CD8-positive, alpha-beta T cell (primary cell): ENCODE measurements at regions of chr11 and their contacts with region 1.

Region 1: GRCh38 chr11:88543902-88544655 is 206.5 kb upstream of the CTSC start:
- DNase-seq: peak; percentile 51 to 85 (median 74)
- ATAC-seq: peak; percentile 94
- H3K4me3 ChIP-seq: no peak overlapping the region
- H3K4me3 Mint-ChIP-seq: no peak overlapping the region
- H3K27ac ChIP-seq: no peak overlapping the region
- H3K27ac Mint-ChIP-seq: no peak overlapping the region
- H3K4me1 ChIP-seq: no peaks in the 10 kb centered on the region
- H3K4me1 Mint-ChIP-seq: peaks cover 2% of the 10 kb centered on the region
- H3K27me3 ChIP-seq: no peaks in the 10 kb centered on the region
- H3K27me3 Mint-ChIP-seq: no peaks in the 10 kb centered on the region
- CTCF ChIP-seq: peak; percentile 93

Region 2: DNA sequence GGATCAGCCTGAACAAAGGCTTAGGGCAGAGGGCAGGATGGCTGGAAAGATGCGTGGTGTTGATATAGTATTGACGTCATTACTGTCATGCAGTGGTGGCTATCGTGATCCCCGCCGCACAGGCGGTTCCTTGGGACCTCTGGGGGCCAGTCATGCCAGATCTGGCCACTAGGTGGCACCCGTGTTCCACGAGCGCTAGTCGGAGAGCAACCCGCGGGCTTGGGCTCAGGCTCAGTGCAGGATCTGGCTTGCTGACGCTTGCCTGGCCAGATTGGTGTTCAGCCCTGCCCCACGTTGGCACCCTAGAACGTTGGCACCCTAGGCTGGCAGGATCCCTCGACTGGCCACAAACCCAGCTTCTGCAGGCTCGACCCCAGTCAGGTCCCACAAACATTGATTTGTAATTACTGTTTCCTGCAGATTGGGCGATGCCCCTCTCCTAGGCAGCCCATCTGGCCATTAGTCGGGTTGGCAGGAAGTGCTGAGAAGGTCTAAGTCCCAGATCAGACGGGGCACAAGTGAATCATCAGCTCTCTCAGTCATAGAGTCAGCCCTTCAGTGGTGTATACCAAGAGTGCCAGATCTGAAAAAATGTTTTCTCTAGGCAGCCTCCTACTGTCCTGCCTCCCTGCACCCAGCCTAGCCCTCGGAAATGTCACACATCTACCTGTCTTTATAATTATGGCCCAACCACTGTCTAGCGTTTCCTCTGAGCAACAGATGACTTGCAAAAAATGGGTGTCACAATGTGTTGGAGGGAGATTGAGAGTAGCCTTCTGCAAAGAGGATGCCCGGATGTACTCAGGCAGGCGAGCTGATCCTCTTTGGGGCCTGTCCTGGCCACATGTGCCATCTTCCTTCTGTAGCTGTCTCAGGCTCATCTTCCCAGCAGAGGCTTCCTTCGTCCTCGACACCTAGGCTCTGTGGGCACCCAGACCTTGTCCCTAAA is 1191.0 kb before region 1 on chr11:
- CTCF ChIA-PET with region 1: interaction called, 4 read pairs
- POLR2A ChIA-PET with region 1: no interaction called
- intact Hi-C with region 1: loop called in 1 of 2 experiments (anchors 1 kb)
- DNase-seq: peak; percentile 66 to 90 (median 80)
- ATAC-seq: peak; percentile 94
- H3K4me3 ChIP-seq: no peak overlapping the region
- H3K4me3 Mint-ChIP-seq: no peak overlapping the region
- H3K27ac ChIP-seq: no peak overlapping the region
- H3K27ac Mint-ChIP-seq: no peak overlapping the region
- H3K4me1 ChIP-seq: peaks cover 5% of the 10 kb centered on the region
- H3K4me1 Mint-ChIP-seq: peaks cover 10% of the 10 kb centered on the region
- H3K27me3 ChIP-seq: no peaks in the 10 kb centered on the region
- H3K27me3 Mint-ChIP-seq: peaks cover 16% of the 10 kb centered on the region
- CTCF ChIP-seq: peak; percentile 97

Region 3: DNA sequence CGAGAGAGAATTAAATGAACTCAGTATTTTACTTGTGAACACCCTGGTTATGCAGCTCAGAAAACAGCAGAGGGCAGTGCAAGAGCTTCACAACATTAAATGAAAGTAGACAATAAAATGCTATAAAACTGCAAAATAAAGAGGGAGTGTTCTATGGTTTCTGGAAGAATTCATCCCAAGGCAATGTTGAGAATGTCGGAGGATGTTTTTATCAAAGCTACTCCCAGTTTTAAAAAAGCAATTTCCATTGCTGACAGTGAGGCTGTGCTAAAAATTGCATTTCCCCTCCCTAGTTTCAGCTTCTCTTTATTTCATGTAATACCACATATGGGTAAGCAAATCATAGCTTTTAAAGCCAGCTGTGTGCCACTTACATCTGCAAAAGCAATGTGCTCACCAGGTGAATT is 665.7 kb before region 1 on chr11:
- CTCF ChIA-PET with region 1: no interaction called
- POLR2A ChIA-PET with region 1: no interaction called
- intact Hi-C with region 1: loop called (anchors 5 kb)
- DNase-seq: no peak
- ATAC-seq: no peak
- H3K4me3 ChIP-seq: no peak overlapping the region
- H3K4me3 Mint-ChIP-seq: no peak overlapping the region
- H3K27ac ChIP-seq: no peak overlapping the region
- H3K27ac Mint-ChIP-seq: no peak overlapping the region
- H3K4me1 ChIP-seq: no peaks in the 10 kb centered on the region
- H3K4me1 Mint-ChIP-seq: no peaks in the 10 kb centered on the region
- H3K27me3 ChIP-seq: no peaks in the 10 kb centered on the region
- H3K27me3 Mint-ChIP-seq: no peaks in the 10 kb centered on the region
- CTCF ChIP-seq: no peak

Region 4: DNA sequence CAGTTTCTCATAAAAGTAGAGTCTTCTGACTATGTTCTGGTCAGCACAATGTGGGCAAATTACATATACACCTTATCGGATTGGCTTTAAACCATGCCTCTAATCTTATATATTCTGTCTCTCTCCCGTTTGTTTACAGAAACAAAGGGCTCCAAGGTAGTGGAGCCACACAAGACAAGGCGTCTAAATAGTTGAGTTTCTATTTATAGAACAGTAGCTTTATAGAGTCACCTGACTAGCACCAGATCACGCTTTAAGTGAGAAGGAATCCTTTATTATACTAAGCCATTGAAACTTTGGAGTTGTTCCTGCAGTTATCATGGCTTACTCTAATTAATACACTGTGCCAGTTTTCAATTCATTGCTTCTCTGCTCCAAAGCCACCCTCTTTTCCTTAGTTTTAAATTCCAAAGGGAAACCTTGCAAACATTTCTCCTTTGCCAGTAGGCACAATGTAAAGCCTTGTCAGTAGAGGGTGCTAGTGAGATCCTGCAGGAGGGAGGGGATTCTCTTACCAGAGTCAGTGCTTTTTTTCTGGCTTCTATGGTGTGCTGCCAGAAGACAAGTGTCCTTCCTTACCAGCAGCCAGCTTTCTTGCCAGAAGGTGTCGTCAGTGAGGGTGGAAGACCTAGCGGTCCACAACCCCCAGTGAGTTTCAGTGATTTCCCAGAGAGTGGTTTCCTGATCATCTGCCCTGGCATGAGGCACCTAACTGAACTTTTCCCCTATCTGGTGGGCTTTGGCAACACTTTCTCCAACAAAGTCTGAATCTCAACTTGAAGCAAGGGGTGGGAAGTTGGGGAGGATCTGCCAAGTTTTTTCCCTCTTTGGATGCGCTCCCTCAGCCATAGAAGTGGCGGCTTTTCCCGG is 440.5 kb before region 1 on chr11:
- CTCF ChIA-PET with region 1: interaction called, 4 read pairs
- POLR2A ChIA-PET with region 1: no interaction called
- intact Hi-C with region 1: loop called in 1 of 2 experiments (anchors 1 kb)
- DNase-seq: peak in 4 of 9 experiments; percentile 11 to 67 (median 38)
- ATAC-seq: peak; percentile 38
- H3K4me3 ChIP-seq: no peak overlapping the region
- H3K4me3 Mint-ChIP-seq: no peak overlapping the region
- H3K27ac ChIP-seq: no peak overlapping the region
- H3K27ac Mint-ChIP-seq: no peak overlapping the region
- H3K4me1 ChIP-seq: no peaks in the 10 kb centered on the region
- H3K4me1 Mint-ChIP-seq: no peaks in the 10 kb centered on the region
- H3K27me3 ChIP-seq: no peaks in the 10 kb centered on the region
- H3K27me3 Mint-ChIP-seq: peaks cover 9% of the 10 kb centered on the region
- CTCF ChIP-seq: peak; percentile 33

Region 5: DNA sequence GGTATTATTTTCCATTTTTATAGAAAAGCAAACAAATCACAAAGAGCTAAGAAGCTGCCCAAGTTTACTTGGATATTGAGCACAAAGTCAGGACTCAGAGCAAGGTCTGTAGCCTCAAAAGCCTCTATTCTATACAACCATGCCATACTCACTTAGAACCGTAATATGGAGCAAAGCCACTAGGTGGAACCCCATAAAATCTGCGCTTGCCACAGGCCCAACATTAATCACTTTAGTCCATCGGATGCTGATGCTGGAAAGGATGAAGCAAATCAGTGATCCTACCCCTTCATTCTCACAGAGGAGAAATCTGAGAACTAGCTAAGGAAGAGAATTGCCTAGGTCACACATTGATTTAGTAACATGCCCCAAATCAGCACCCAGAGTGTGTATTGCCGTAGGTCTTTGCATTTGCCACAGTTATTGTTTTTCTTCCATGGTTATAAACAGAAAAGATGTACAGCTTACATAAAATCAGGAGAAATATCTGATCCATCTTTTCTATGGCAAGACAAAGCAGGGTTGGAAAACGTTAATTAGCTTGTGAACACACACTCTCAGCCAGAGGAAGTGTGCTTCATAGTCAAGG is 312.1 kb before region 1 on chr11:
- CTCF ChIA-PET with region 1: interaction called, 48 read pairs
- POLR2A ChIA-PET with region 1: no interaction called
- intact Hi-C with region 1: loop called (anchors 1 kb)
- DNase-seq: peak in 2 of 9 experiments; percentile 38 to 51
- ATAC-seq: peak; percentile 40
- H3K4me3 ChIP-seq: no peak overlapping the region
- H3K4me3 Mint-ChIP-seq: no peak overlapping the region
- H3K27ac ChIP-seq: no peak overlapping the region
- H3K27ac Mint-ChIP-seq: no peak overlapping the region
- H3K4me1 ChIP-seq: no peaks in the 10 kb centered on the region
- H3K4me1 Mint-ChIP-seq: no peaks in the 10 kb centered on the region
- H3K27me3 ChIP-seq: no peaks in the 10 kb centered on the region
- H3K27me3 Mint-ChIP-seq: no peaks in the 10 kb centered on the region
- CTCF ChIP-seq: peak; percentile 50

Region 6: DNA sequence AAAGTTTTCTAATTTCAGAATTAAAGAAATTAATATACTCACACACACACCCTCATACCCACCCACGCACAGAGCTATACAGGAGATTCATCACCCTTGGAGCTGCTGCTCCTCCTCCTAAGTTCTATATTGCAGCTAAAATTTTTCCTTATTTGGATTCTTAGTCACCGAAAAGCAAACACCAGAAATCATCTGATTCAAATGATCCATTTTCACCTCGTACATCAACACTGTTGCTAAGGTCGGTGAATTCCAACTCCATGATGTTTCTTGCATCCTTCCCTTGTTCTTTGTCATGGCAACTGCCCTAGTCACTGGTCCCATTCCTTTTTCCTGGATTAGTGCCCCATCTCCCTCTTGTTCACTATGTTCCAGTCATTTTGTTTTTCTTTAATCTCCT is 235.5 kb after region 1 on chr11:
- CTCF ChIA-PET with region 1: no interaction called
- POLR2A ChIA-PET with region 1: no interaction called
- intact Hi-C with region 1: no loop called
- DNase-seq: no peak
- ATAC-seq: no peak
- H3K4me3 ChIP-seq: no peak overlapping the region
- H3K4me3 Mint-ChIP-seq: no peak overlapping the region
- H3K27ac ChIP-seq: no peak overlapping the region
- H3K27ac Mint-ChIP-seq: no peak overlapping the region
- H3K4me1 ChIP-seq: no peaks in the 10 kb centered on the region
- H3K4me1 Mint-ChIP-seq: peaks cover 4% of the 10 kb centered on the region
- H3K27me3 ChIP-seq: no peaks in the 10 kb centered on the region
- H3K27me3 Mint-ChIP-seq: no peaks in the 10 kb centered on the region
- CTCF ChIP-seq: no peak

Region 7: GRCh38 chr11:88886796-88887195 is 342.7 kb after region 1 on chr11:
- CTCF ChIA-PET with region 1: interaction called, 9 read pairs
- POLR2A ChIA-PET with region 1: interaction called, 3 read pairs
- intact Hi-C with region 1: loop called in 1 of 2 experiments (anchors 5 kb)
- DNase-seq: peak in 8 of 9 experiments; percentile 5 to 58 (median 23)
- ATAC-seq: no peak
- H3K4me3 ChIP-seq: no peak overlapping the region
- H3K4me3 Mint-ChIP-seq: no peak overlapping the region
- H3K27ac ChIP-seq: no peak overlapping the region
- H3K27ac Mint-ChIP-seq: no peak overlapping the region
- H3K4me1 ChIP-seq: no peaks in the 10 kb centered on the region
- H3K4me1 Mint-ChIP-seq: peaks cover 1% of the 10 kb centered on the region
- H3K27me3 ChIP-seq: no peaks in the 10 kb centered on the region
- H3K27me3 Mint-ChIP-seq: no peaks in the 10 kb centered on the region
- CTCF ChIP-seq: peak; percentile 36